ENCODE measurements at regions of chr15 and their contacts with region 1.

Region 1: DNA sequence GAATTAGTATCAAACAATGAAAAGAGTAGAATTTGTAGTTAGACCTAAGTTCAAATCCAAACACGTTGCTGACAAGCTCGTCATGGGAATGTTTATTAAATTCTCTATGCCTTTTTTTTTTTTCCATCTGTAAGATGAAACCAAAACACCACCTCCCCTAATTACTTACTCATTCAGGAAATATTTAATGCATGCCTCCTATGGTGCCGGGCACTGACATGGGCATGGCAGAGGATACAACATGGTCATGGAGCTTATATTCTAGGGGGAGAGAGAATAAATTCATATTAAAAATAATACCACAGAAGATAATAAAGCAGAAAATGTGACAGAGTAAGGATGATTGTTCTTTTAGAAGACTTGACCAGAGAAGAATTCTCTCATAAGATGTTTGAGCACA is 215.8 kb downstream of the RYR3 start:
- DNase-seq: no peak
- H3K4me3 ChIP-seq: no peak overlapping the region
- H3K27ac ChIP-seq: no peak overlapping the region
- H3K4me1 ChIP-seq: no peaks in the 10 kb centered on the region
- H3K27me3 ChIP-seq: no peaks in the 10 kb centered on the region
- CTCF ChIP-seq: no peak
- POLR2A ChIP-seq: no peak

Region 2: DNA sequence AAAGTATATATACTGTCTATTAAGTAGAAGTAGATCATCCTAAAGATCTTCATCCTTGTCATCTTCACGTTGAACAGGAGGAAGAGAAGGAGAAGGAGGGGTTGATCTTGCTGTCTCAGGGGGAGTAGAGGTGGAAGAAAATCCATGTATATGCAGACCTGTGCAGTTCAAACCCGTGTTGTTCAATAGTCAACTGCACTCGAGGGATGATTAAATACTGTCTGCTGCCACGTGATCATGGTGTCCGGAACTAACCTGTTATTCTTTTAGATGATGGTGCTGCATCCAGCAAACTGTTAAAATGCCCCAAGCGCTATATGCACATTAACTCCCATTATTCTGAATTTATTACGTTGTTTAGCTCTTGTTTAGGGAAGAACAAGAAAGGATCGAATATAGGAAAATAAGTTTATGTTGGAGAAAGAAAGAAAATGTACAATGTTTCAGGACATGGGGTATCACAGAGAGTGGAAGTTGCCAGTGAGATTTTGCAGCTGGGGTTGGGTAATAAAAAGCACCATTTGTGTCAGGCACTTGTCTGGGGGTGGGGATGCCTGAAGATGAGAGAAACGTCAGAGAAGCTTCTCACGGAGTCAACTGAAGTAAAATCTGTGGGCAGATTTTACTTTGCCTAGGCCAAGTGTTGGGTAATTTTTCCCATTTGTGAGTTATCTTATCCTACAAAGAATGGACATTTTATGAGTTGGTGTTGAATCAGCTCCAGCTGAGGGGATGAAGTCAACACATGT is 13.5 kb after region 1 on chr15:
- intact Hi-C with region 1: loop called (anchors 2 kb)
- DNase-seq: no peak
- H3K4me3 ChIP-seq: no peak overlapping the region
- H3K27ac ChIP-seq: no peak overlapping the region
- H3K4me1 ChIP-seq: no peaks in the 10 kb centered on the region
- H3K27me3 ChIP-seq: no peaks in the 10 kb centered on the region
- CTCF ChIP-seq: no peak
- POLR2A ChIP-seq: no peak

Region 3: DNA sequence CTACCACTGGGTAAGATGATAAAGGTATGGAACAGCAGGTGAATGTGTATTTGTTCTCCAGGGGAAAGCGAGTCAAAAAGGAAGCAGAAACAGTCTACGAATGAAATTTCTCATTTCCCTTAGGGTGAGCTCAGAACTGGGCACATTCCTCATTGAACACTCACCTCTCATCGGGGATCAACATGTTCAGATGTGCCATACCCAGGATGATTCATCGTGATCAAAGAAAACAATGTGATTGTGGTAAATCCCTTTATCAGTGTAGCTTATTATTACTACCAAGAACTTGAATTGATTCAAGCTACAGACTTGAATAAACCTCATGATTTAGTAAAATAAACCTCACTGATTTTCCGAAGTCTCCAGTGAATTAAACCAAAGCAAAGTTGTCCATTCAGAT is 1156.1 kb after region 1 on chr15:
- intact Hi-C with region 1: no loop called
- DNase-seq: no peak
- H3K4me3 ChIP-seq: no peak overlapping the region
- H3K27ac ChIP-seq: no peak overlapping the region
- H3K4me1 ChIP-seq: no peaks in the 10 kb centered on the region
- H3K27me3 ChIP-seq: no peaks in the 10 kb centered on the region
- CTCF ChIP-seq: no peak
- POLR2A ChIP-seq: no peak

Measured in vagina (tissue), 2 donors.